ENCODE measurements at regions of chr2 and their contacts with region 1.

Region 1: GRCh38 chr2:222939208-222939856 is 78.5 kb downstream of the ACSL3 start:
- H3K4me3 ChIP-seq: no peak overlapping the region
- H3K27ac ChIP-seq: no peak overlapping the region
- H3K4me1 ChIP-seq: no peaks in the 10 kb centered on the region
- CTCF ChIP-seq: peak; percentile 57

Region 2: DNA sequence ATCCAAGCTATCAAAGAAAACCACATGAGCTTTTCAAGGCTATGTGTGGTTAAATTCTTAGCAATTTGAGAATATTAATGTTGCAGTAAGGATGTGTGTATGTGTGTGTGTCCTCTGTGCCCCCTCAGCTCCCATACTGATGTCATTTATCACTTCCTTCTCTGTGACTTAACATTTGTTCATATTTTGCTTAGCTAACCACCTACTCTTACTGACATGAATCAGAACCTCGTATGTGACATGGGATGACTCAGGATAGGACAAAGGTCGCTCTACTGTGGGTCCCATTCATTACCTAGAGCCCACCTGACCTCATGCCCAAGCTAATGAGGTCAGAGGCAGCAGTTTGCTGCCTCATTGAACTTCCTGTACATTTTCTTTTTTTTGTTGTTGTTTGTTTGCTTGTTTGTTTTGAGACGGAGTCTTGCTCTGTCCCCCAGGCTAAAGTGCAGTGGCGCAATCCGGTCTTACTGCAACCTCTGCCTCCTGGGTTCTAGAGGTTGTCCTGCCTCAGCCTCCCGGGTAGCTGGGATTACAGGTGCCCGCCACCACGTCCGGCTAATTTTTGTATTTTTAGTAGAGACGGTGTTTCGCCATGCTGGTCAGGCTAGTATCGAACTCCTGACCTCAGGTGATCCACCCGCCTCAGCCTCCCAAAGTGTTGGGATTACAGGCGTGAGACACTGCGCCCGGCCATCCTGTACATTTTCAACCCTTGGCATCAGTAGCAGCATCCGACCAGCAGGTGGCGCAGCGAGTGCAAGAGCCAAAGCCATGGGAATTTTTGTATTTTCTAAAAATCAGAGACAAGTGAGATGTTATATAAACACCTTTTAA is 231.4 kb before region 1 on chr2:
- CTCF ChIA-PET with region 1: interaction called, 33 read pairs
- POLR2A ChIA-PET with region 1: no interaction called
- H3K4me3 ChIP-seq: no peak overlapping the region
- H3K27ac ChIP-seq: no peak overlapping the region
- H3K4me1 ChIP-seq: no peaks in the 10 kb centered on the region
- CTCF ChIP-seq: peak; percentile 79

Region 3: GRCh38 chr2:222888716-222889115 is 50.6 kb before region 1 on chr2:
- CTCF ChIA-PET with region 1: no interaction called
- POLR2A ChIA-PET with region 1: no interaction called
- H3K4me3 ChIP-seq: no peak overlapping the region
- H3K27ac ChIP-seq: no peak overlapping the region
- H3K4me1 ChIP-seq: peaks cover 29% of the 10 kb centered on the region
- CTCF ChIP-seq: no peak

Region 4: GRCh38 chr2:222926915-222927314 is 12.4 kb before region 1 on chr2:
- CTCF ChIA-PET with region 1: interaction called, 13 read pairs
- POLR2A ChIA-PET with region 1: no interaction called
- H3K4me3 ChIP-seq: no peak overlapping the region
- H3K27ac ChIP-seq: no peak overlapping the region
- H3K4me1 ChIP-seq: no peaks in the 10 kb centered on the region
- CTCF ChIP-seq: no peak

Region 5: DNA sequence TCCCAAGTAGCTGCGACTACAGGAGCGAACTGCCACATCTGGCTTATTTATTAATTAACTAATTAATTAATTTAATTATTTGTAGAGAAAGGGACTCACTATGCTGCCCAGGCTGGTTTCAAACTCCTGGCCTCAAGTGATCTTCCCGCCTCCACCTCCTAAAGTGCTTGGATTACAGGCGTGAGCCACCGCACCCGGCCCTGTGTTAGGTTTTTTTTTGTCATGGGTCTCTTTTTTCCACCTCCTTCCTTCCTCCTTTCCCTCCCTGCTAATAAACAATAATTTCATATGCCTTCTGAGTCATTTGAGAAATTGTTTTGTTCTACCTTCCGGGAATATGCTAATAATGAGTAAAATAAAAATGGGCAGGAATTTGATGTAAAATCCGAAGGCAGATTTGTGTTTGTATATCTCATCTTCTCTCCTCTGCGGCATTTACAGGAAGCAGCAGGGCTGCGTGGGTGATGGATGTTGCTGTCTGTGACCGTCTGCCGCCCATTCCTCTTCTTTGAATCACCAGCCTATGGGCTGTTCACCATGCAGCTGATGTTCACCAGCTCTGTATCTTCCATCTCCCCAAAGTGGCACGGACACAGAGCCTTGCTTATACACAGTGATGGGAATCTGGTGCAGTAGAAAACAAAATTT is 11.4 kb after region 1 on chr2:
- CTCF ChIA-PET with region 1: interaction called, 17 read pairs
- POLR2A ChIA-PET with region 1: no interaction called
- H3K4me3 ChIP-seq: no peak overlapping the region
- H3K27ac ChIP-seq: no peak overlapping the region
- H3K4me1 ChIP-seq: no peaks in the 10 kb centered on the region
- CTCF ChIP-seq: no peak

Region 6: DNA sequence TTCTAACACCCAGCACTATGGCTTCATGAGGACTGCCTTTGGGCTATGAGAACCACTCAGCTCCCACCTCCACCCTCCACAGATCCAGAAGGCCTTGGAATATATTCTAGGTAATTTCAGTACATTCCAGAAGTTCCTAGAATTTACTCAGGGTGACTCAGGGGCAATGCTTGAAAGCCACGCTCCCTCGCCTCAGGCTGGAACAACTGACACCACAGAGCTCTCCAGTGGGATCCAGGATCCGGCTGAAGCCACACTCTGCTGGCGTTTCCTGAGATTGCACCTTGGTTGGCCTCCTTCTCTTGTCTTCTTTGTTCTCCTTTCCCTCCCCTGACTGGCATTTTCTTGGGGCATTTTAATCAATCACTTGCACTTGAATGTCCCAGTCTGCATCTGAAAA is 20.0 kb after region 1 on chr2:
- CTCF ChIA-PET with region 1: interaction called, 10 read pairs
- POLR2A ChIA-PET with region 1: no interaction called
- H3K4me3 ChIP-seq: no peak overlapping the region
- H3K27ac ChIP-seq: no peak overlapping the region
- H3K4me1 ChIP-seq: no peaks in the 10 kb centered on the region
- CTCF ChIP-seq: no peak

Measured in HEK293 (cell line).